HepG2 (cell line): ENCODE measurements at regions of chr2 and their contacts with region 1.

Region 1: GRCh38 chr2:219294356-219295351 is 14.5 kb downstream of the PTPRN start:
- DNase-seq: peak; percentile 80
- ATAC-seq: peak; percentile 85
- H3K4me3 ChIP-seq: peak overlapping the region; percentile 60 to 81 (median 80)
- H3K27ac ChIP-seq: no peak overlapping the region
- H3K4me1 ChIP-seq: peaks cover 36% of the 10 kb centered on the region
- H3K27me3 ChIP-seq: peaks cover 6 to 83% of the 10 kb centered on the region in 2 experiments; a peak in 4 of 5 replicates
- CTCF ChIP-seq: peak; percentile 93
- EP300 ChIP-seq: peak; percentile 48 to 53; a peak in 1 of 4 replicates
- POLR2A ChIP-seq: peak; percentile 48 to 70; a peak in 3 of 4 replicates
- RAD21 ChIP-seq: peak; percentile 99

Region 2: DNA sequence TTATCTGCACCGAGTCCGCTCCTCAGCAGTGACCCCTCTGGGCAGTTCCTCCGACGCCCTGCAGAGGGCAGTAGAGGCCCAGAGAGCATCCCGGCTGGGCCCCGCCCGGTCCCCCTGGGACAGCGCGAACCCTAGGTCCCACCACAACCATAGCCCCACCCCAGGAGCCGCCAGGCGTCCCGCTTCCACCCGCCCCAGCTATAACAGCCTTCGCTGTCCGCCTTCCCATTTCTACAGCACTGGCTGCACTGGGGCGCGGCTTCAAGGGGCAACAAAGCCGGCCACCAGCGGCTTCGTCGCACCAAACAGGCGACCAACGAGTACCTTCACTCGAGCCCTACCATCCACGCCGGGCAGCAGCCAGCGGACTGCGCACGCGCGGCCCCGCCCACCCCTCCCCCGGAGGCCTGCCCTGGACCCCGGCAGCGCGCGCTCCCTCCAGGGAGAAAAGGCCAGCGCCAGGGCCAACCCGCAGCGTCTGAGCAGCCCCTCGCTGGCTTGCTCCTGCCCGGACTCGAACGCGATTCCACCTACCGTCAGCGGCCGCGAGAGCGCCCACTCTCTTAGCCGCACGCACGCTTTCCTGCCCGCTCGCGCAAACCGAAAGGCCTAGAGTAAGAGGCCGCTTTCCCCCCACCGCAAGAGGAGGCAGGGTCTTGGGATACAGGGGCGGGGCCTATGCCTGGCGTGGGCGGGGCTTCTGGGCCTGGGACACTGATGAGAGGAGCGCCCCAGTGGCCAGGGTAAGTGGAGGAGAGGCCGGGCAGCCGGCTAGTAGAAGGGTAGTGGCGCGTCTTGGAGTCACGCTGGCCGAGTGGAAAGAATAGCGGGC is 134.3 kb before region 1 on chr2 and contains the start of gene NHEJ1:
- CTCF ChIA-PET with region 1: interaction called, 50 read pairs
- POLR2A ChIA-PET with region 1: interaction called, 3 read pairs
- in situ Hi-C with region 1: no loop called
- intact Hi-C with region 1: loop called (anchors 1 kb)
- DNase-seq: peak; percentile 90
- ATAC-seq: peak; percentile 91
- H3K4me3 ChIP-seq: peak within 1 kb of the TSS; percentile 76 to 94 (median 86)
- H3K27ac ChIP-seq: peak within 1 kb of the TSS; percentile 93
- H3K4me1 ChIP-seq: peaks cover 18% of the 10 kb centered on the region
- H3K27me3 ChIP-seq: no peaks in the 10 kb centered on the region
- CTCF ChIP-seq: peak; percentile 96
- EP300 ChIP-seq: no peak
- POLR2A ChIP-seq: peak; percentile 68 to 93
- RAD21 ChIP-seq: peak; percentile 97
- total RNA-seq, gene NHEJ1: 30.7 and 42.1 TPM in 2 replicates

Region 3: GRCh38 chr2:219171231-219171651 is 123.4 kb before region 1 on chr2:
- CTCF ChIA-PET with region 1: interaction called, 12 read pairs
- POLR2A ChIA-PET with region 1: interaction called, 19 read pairs
- in situ Hi-C with region 1: loop called (anchors 5 kb)
- intact Hi-C with region 1: loop called (anchors 1 kb)
- DNase-seq: peak; percentile 62
- ATAC-seq: peak; percentile 54
- H3K4me3 ChIP-seq: no peak overlapping the region
- H3K27ac ChIP-seq: no peak overlapping the region
- H3K4me1 ChIP-seq: peaks cover 33% of the 10 kb centered on the region
- H3K27me3 ChIP-seq: peaks cover 0 to 2% of the 10 kb centered on the region in 2 experiments; a peak in 1 of 5 replicates
- CTCF ChIP-seq: peak; percentile 72
- EP300 ChIP-seq: no peak
- POLR2A ChIP-seq: no peak
- RAD21 ChIP-seq: peak; percentile 58

Region 4: DNA sequence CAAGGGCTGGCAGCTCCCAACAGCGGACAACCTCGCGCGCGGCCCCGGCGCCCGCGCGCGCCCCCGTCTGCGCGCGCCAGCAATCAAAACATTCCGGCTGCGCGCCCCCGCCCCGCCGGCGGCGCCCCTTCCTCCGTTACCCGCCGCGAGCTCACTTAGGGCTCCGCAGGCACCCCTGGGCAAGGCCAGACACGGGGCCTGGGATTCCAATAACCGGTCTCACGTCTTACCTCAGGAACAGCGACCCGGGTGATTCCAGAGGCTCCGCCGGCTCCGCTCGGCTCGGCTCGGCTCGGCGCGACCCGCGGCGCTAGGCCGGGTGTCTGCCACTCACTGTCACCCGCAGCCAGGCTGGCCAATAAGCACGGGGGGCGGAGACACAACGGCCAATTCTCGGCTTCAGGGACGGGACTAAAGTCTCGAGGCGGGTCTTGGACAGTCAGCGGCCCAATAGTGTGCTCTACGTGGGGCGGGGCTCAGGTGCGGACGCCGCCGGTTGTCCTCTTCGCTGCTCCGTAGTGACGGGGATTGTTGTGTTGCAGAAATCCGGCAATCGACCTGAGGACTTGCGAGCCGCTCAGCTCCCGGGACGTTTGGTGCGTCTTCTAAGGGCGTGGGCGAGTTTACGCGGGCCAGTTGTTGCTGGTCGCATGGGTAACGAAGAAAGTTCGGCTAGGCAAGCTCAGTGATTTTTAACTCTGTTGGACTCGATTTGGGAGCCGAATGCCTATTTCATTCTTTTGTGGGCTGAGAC is 65.2 kb before region 1 on chr2 and contains the starts of genes ANKZF1 and ATG9A:
- CTCF ChIA-PET with region 1: interaction called, 15 read pairs
- POLR2A ChIA-PET with region 1: interaction called, 8 read pairs
- in situ Hi-C with region 1: no loop called
- intact Hi-C with region 1: loop called (anchors 1 kb)
- DNase-seq: peak; percentile 99
- ATAC-seq: peak; percentile 94
- H3K4me3 ChIP-seq: peak within 1 kb of the TSS; percentile 91 to 93 (median 93)
- H3K27ac ChIP-seq: peak within 1 kb of the TSS; percentile 81
- H3K4me1 ChIP-seq: peaks cover 39% of the 10 kb centered on the region
- H3K27me3 ChIP-seq: no peaks in the 10 kb centered on the region; a peak in 1 of 5 replicates
- CTCF ChIP-seq: peak; percentile 9; the same call in 1 of the 2 replicates
- EP300 ChIP-seq: peak; percentile 20 to 21; a peak in 3 of 4 replicates
- POLR2A ChIP-seq: peak; percentile 85 to 92
- RAD21 ChIP-seq: peak; percentile 73
- total RNA-seq, gene ANKZF1: 14.6 and 25.3 TPM in 2 replicates
- total RNA-seq, gene ATG9A: 22.2 and 35.0 TPM in 2 replicates

Region 5: GRCh38 chr2:219308142-219309093 is 13.8 kb after region 1 on chr2:
- CTCF ChIA-PET with region 1: no interaction called
- POLR2A ChIA-PET with region 1: no interaction called
- in situ Hi-C with region 1: no loop called
- intact Hi-C with region 1: no loop called
- DNase-seq: peak; percentile 41
- ATAC-seq: peak; percentile 97
- H3K4me3 ChIP-seq: no peak overlapping the region
- H3K27ac ChIP-seq: no peak overlapping the region
- H3K4me1 ChIP-seq: no peaks in the 10 kb centered on the region
- H3K27me3 ChIP-seq: peaks cover 1 to 19% of the 10 kb centered on the region in 2 experiments; a peak in 3 of 5 replicates
- CTCF ChIP-seq: peak; percentile 33
- EP300 ChIP-seq: no peak
- POLR2A ChIP-seq: no peak
- RAD21 ChIP-seq: 0 out of 2 replicates have a peak, but pooled peaks have one; percentile 27